Activated T-helper 2 cell treated with anti-CD3 and anti-CD28 coated beads, Interferon-gamma antibody, Interleukin-2, Interleukin-4, amounts not matched to agents 10 μg/mL and 5 μg/mL and 100 μg/mL, durations not matched to agents 14 hours and 24 hours and 36 hours (primary cell): ENCODE measurements at regions of chr4 and their contacts with region 1.

Region 1: DNA sequence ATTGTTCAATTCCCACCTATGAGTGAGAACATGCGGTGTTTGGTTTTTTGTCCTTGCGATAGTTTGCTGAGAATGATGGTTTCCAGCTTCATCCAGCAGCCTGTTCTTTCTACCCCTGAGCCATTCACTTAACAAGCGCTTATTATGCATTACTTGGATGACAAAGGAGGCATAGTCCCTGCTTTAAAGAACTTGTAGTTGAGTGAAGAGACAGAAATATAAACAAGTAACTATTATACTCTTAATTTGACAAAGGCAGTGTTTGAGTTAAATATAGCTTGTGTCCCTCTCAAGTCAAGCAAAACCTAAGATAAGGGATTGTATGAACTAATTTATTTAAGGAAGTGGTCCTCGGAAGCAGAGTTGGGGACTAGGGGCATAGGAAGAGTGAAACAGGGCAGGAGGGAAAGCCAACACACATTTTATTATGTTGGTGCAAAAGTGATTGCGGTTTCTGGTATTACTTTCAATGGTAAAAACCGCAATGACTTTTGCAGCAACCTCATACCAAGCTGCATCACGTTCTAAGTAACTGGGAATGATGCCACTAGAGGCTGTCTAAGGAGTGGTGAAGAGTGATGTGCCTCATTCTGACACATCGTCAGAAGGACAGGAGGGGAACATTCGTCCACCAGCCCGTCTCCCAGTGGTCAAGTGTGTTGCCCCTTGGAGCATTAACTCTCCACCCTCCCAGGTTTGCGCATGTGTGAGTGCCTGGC is 41.8 kb downstream of the QDPR start:
- DNase-seq: no peak
- H3K4me3 Mint-ChIP-seq: no peak overlapping the region
- H3K27ac Mint-ChIP-seq: no peak overlapping the region
- H3K4me1 Mint-ChIP-seq: peaks cover 2% of the 10 kb centered on the region
- H3K27me3 Mint-ChIP-seq: no peaks in the 10 kb centered on the region

Region 2: GRCh38 chr4:17336524-17336961 is 133.5 kb before region 1 on chr4:
- intact Hi-C with region 1: loop called (anchors 5 kb)
- DNase-seq: peak; percentile 80
- H3K4me3 Mint-ChIP-seq: no peak overlapping the region
- H3K27ac Mint-ChIP-seq: peak overlapping the region; percentile 79
- H3K4me1 Mint-ChIP-seq: peaks cover 38% of the 10 kb centered on the region
- H3K27me3 Mint-ChIP-seq: peaks cover 2% of the 10 kb centered on the region

Region 3: GRCh38 chr4:18291256-18291655 is 821.2 kb after region 1 on chr4:
- intact Hi-C with region 1: no loop called
- DNase-seq: no peak
- H3K4me3 Mint-ChIP-seq: no peak overlapping the region
- H3K27ac Mint-ChIP-seq: no peak overlapping the region
- H3K4me1 Mint-ChIP-seq: no peaks in the 10 kb centered on the region
- H3K27me3 Mint-ChIP-seq: no peaks in the 10 kb centered on the region